GM10248 (cell line): ENCODE measurements at regions of chr19 and their contacts with region 1.

Region 1: GRCh38 chr19:47210689-47211316 is 20.2 kb downstream of the BBC3 start:
- DNase-seq: peak; percentile 78
- CTCF ChIP-seq: peak; percentile 80

Region 2: DNA sequence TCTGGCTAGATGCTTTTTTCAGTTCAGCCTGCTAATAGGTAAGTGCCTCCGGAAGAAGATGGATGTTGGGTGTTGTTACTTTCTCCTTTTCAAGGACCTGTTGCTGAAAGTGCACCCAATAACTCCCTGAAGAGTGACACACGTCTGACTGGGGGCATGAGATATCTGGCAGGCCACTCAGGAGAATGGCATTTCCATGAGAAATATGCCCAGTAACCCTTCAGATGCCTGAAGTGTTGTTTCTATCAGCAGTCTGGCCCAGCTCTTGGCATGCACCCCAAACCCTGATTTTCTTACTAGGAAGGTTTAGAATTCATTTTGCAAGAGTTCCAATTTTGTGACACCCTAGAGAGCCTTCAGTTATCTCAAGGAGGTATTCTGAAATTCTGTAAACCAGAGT is 278.5 kb before region 1 on chr19:
- CTCF ChIA-PET with region 1: no interaction called
- POLR2A ChIA-PET with region 1: no interaction called
- DNase-seq: no peak
- CTCF ChIP-seq: no peak

Region 3: DNA sequence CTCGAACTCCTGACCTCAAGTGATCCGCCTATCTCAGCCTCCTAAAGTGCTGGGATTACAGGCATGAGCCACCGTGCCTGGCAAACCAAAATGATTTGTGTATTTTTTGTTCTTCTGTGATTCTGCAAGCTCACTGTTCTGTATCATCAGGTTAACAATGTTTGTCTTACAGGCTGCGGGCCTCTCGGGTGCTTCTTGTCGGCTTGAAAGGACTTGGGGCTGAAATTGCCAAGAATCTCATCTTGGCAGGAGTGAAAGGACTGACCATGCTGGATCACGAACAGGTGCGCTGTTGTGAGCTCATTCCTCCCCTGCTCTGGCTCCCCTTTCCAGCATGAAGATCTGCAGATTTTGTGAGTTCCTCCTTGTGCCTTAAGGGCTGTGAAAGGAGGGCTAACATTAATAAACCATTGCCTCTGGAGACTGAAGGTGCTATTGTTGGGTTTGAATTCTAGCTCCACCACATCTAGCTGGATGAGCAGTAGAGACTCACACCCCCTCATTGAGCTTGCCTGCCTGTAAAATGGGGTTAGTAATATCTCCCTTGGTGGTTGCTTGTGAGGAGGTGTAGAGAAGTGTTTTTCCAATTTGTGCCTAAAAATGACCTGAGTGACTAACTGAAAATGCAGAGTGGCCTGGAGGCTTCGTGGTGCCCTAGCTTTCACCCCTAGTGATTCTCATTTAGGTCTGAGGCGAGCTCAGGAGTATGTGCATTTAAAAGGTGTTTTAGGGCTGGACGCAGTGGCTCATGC is 67.3 kb before region 1 on chr19:
- CTCF ChIA-PET with region 1: interaction called, 30 read pairs
- POLR2A ChIA-PET with region 1: no interaction called
- DNase-seq: no peak
- CTCF ChIP-seq: no peak

Region 4: DNA sequence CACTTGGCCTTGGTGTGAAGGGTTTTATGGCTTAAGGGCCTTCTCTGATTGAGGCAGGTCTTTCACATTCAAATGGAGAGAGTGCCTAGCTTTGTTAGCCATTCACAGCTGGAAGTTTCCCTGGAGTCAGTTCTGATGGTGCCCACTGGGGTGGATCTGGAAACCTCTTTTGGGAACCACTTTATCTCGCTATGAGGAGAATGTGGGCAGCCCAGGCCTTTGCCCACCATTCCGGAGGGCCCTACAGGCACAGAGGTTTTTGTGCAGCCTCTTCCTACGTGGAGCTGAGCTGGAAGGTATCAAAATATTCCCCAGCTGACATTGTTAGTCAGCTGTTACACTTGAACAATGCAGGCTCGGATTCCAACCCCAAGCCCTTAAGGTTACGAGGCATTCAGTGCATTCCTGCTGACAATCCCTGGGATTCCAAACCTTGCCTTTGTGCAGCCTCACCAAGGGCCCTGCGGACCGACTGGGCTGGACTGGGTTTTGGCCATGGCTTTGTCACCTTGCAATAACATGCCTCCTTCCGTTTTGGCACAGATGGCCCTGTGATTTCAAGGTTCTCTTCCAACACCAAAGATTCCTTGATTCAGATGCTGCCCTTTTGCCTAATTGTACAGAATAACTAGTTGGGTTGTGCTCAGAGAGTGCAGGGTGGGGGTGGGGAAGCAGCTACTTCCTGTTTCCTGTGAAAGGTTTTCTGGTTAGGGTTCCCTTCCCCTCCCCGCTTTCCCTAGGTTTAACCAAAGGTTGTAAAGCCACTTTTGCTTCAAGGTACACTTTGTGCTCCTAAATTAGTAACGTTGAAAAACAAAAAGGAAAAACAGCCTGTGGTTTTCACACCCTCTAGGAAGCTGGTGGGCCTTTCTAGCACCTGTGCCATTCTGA is 53.1 kb before region 1 on chr19:
- CTCF ChIA-PET with region 1: interaction called, 33 read pairs
- POLR2A ChIA-PET with region 1: no interaction called
- DNase-seq: no peak
- CTCF ChIP-seq: no peak

Region 5: GRCh38 chr19:47176627-47177090 is 34.1 kb before region 1 on chr19:
- CTCF ChIA-PET with region 1: interaction called, 40 read pairs
- POLR2A ChIA-PET with region 1: interaction called, 3 read pairs
- DNase-seq: no peak
- CTCF ChIP-seq: no peak

Region 6: GRCh38 chr19:47225746-47226425 is 15.1 kb after region 1 on chr19:
- CTCF ChIA-PET with region 1: interaction called, 153 read pairs
- POLR2A ChIA-PET with region 1: interaction called, 61 read pairs
- DNase-seq: peak; percentile 94
- CTCF ChIP-seq: peak; percentile 34

Region 7: DNA sequence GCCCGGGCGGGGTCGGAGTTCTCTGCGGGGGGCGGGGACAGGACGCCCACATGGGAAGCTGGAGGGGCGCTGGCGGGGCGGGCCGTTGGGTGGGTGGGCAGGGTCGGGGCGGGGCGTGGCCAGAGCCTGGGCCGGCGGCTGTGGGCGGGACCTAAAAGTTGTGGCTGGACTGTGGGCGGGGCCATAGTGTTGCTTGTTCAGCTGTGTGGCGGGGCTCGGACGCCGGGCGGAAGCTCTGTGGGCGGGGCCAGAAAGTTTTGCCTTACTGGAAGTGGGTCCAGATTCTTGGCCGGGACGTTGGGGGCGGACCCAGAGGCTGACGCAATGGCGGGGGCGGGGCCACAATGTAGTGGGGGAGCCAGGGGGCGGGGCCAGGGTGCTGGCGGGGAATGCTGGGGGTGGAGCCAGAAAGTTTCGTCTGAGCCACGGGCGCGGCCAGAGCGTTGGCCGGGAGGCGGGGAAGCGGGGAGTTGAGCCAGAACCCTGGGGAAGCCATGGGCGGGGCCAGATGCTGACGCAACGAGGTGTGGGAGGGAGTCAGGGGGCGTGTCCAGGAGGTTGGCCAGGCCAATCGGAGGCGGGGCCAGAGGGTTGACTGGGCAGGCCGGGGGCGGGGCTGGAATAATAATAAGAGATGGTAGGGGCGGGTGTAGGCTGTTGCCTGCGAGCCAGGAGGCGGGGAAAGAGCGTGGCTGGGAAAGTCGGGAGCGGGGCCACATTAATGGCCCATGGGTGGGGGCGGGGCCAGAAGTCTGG is 46.1 kb after region 1 on chr19:
- CTCF ChIA-PET with region 1: interaction called, 444 read pairs
- POLR2A ChIA-PET with region 1: interaction called, 3 read pairs
- DNase-seq: peak; percentile 99
- CTCF ChIP-seq: no peak

Region 8: DNA sequence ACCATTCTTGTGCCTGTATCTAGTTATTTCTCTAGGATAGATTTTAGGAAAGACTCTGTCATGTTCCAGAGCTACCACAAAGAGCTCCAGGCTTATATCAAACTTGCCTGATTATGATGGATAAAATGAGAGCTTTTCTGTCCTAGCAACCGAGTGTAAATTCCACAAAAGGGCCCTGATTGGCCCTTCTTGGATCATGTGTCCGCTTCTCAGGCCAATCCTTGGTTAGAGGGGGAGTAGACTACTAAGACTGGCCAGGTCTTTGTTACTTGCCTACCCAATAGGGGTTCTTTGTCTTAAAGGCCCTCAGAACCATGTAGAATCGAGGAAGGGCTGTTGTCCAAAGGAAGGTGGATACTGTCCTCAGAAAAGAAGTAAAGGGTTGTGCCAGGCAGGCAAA is 140.7 kb after region 1 on chr19:
- CTCF ChIA-PET with region 1: no interaction called
- POLR2A ChIA-PET with region 1: no interaction called
- DNase-seq: no peak
- CTCF ChIP-seq: no peak